GM10248 (cell line): ENCODE measurements at regions of chr19 and their contacts with region 1.

Region 1: DNA sequence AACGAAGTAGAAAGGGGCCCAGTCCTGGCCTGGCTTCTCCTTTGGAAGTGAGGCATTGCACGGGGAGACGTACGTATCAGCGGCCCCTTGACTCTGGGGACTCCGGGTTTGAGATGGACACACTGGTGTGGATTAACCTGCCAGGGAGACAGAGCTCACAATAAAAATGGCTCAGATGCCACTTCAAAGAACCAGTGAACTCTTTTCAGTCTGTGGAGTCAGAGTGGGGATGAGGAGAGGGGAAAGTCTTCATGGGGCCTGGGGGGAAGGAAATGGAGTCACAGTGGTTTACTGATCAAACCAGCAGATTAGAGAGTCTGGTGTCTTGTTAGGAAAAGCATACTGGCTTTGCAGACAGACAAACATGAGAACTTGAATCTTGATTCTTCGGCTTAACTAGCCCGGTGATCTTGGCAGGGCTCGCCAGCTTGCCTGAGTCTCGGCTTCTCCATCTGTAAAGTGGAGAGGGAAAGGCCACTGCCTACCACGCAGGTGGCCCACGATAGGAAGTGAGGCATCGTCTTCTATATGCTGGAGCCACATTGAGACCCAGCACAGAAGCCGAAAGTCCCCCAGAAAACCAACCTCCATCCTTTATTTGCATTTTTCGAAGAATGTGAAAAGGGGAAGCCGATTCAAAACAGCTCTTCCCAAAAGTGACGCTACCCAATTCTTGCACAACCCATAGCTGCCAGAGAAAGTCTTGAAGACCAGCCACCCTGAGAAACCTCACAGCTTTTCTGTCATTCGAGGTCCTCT is at the start of gene FFAR1:
- DNase-seq: peak; percentile 78
- CTCF ChIP-seq: no peak

Region 2: GRCh38 chr19:35306473-35307246 is 40.7 kb before region 1 on chr19:
- CTCF ChIA-PET with region 1: no interaction called
- POLR2A ChIA-PET with region 1: no interaction called
- DNase-seq: peak; percentile 50
- CTCF ChIP-seq: peak; percentile 43

Region 3: GRCh38 chr19:35337097-35337983 is 10.0 kb before region 1 on chr19:
- CTCF ChIA-PET with region 1: interaction called, 26 read pairs
- POLR2A ChIA-PET with region 1: interaction called, 16 read pairs
- DNase-seq: peak; percentile 25
- CTCF ChIP-seq: no peak